Activated CD4-positive, alpha-beta memory T cell treated with anti-CD3 and anti-CD28 coated beads, Interleukin-2, amount 10 ng/mL, durations not matched to agents 7 days and 5 days (primary cell): ENCODE measurements at regions of chr17 and their contacts with region 1.

Region 1: DNA sequence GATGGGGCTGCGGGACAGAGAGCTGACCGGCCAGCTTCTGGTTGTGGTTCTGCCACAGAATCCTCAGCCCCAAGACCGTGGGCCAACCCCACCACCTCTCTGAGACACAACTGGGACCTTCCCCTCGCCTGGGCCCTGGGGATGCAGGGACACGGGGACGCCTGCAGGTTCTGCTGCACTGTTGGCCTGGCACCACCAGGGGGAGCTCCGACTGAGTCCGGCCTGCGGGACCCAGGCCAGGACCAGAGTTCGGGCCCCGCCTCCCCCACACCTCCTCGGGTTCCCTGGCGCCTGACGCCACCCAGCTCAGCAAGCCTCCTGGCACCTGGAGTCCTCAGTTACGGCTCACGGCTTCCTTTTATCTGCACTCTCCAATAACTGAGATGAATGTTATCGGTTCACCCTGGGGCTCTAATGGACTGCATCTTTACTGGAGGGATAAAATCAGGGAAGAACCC is 27.3 kb downstream of the TBC1D16 start:
- DNase-seq: peak; percentile 79
- H3K4me3 Mint-ChIP-seq: no peak overlapping the region
- H3K27ac Mint-ChIP-seq: no peak overlapping the region
- H3K4me1 Mint-ChIP-seq: peaks cover 3% of the 10 kb centered on the region
- H3K27me3 Mint-ChIP-seq: no peaks in the 10 kb centered on the region

Region 2: GRCh38 chr17:79997011-79997660 is 11.3 kb before region 1 on chr17:
- CTCF ChIA-PET with region 1: interaction called, 34 read pairs
- POLR2A ChIA-PET with region 1: interaction called, 3 read pairs
- DNase-seq: peak; percentile 88
- H3K4me3 Mint-ChIP-seq: peak overlapping the region; percentile 46
- H3K27ac Mint-ChIP-seq: peak overlapping the region; percentile 93
- H3K4me1 Mint-ChIP-seq: peaks cover 51% of the 10 kb centered on the region
- H3K27me3 Mint-ChIP-seq: peaks cover 4% of the 10 kb centered on the region

Region 3: DNA sequence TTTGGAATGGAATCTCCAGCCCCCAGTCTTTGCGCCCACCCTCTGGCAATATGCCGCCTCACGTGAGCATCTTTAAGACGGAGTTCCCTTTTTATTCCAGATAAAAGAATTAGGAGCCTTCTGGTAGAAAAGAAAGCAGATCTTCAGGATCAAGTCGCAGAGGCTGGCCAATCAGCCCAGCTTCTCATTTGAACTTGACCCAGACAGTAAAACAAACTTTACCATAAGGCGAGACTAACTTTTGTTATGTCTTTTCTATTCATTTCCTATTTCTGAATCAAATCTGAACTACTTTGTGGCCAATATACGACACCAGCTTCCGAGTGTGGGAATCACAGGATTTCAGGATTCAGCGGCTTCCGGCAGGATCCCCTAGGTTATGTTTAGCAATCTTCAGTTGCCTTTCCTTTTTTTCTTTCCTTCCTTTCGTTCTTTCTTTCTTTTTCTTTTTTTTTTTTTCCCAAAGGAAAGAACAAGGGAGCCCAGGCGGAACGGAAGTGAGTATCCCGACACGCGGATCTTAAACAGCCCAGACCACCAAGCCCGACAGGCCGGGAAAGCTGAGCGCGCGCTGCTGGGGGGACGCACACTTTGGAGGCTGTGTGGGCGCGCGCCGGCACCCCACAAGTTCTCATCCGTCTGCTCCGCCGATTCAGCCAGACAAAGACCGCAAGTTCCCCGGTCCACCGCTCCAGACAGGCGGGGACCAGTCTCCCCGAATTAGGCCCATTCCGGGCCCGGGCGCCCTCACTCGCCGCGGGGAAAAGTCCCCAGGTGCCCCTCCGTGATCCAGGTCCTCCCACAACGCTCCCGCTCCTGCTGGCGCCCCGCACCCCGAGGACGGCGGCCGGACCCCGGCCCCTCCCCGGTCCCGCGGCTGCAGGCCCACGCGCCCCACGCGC is 26.6 kb after region 1 on chr17:
- CTCF ChIA-PET with region 1: interaction called, 13 read pairs
- POLR2A ChIA-PET with region 1: no interaction called
- DNase-seq: peak; percentile 57
- H3K4me3 Mint-ChIP-seq: peak overlapping the region; percentile 70
- H3K27ac Mint-ChIP-seq: no peak overlapping the region
- H3K4me1 Mint-ChIP-seq: peaks cover 14% of the 10 kb centered on the region
- H3K27me3 Mint-ChIP-seq: peaks cover 32% of the 10 kb centered on the region

Region 4: DNA sequence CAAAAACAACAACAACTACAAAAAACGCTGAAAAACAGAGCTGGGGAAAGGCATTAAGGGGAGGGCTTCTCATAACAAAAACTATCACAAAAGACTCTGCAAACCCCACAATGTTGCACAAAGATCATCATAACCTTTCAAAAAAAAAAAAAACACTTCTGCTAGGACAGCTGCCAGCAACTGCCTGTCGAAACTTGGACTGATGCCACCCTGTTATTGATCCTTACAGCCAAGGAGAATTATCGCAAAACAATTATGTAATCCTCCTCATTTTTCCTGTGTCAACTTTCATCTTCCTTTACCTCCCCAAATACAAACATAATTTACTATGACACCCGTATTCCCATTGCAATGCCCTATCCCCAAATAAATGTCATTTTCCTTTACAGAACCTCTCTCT is 37.3 kb after region 1 on chr17:
- CTCF ChIA-PET with region 1: no interaction called
- POLR2A ChIA-PET with region 1: no interaction called
- DNase-seq: no peak
- H3K4me3 Mint-ChIP-seq: no peak overlapping the region
- H3K27ac Mint-ChIP-seq: no peak overlapping the region
- H3K4me1 Mint-ChIP-seq: no peaks in the 10 kb centered on the region
- H3K27me3 Mint-ChIP-seq: no peaks in the 10 kb centered on the region